Breast epithelium (tissue), 4 donors: ENCODE measurements at regions of chr10 and their contacts with region 1.

Region 1: DNA sequence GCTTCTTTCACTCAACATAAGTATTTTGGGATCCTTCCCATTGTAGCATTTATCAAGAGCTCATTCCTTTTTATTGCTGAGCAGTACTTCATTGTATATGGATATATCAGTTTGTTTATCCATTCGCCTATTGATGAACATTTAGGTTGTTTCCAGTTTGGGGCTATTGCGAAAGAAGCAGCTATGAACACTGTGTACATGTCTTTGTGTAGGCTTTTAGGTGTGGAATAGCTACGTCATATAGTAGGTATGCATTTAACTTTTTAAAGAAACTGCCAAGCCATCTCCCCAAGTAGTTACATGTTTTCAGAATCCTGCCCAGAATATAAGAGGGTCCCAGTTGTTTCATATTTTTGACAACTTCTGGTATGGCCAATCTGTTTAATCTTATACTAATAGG is 468.1 kb downstream of the IPMK start:
- DNase-seq: no peak
- H3K4me3 ChIP-seq: no peak overlapping the region
- H3K27ac ChIP-seq: no peak overlapping the region
- H3K4me1 ChIP-seq: no peaks in the 10 kb centered on the region
- H3K27me3 ChIP-seq: no peaks in the 10 kb centered on the region
- CTCF ChIP-seq: no peak
- POLR2A ChIP-seq: no peak

Region 2: GRCh38 chr10:57460540-57460939 is 339.1 kb before region 1 on chr10:
- intact Hi-C with region 1: loop called (anchors 5 kb)
- DNase-seq: no peak
- H3K4me3 ChIP-seq: no peak overlapping the region
- H3K27ac ChIP-seq: no peak overlapping the region
- H3K4me1 ChIP-seq: no peaks in the 10 kb centered on the region
- H3K27me3 ChIP-seq: no peaks in the 10 kb centered on the region
- CTCF ChIP-seq: no peak
- POLR2A ChIP-seq: no peak

Region 3: DNA sequence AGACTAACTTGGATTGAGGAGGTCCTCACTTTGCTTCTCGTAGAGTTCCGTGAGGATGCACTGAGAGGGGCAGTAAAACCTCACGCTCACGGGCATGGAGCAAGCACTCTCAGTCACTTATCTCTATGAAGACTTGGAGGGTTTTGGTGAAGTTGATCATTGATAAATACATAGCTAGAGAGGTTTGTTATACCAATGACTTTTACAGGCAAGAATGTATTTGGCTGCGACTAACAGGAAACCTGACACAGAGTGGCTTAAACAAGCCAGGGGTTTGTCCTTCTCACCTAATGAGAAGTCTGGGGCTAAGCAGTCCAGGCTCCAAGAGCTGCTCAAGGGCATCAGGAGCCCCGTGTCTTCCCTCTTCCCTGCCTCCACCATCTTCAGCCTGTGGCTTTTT is 719.1 kb after region 1 on chr10:
- intact Hi-C with region 1: no loop called
- DNase-seq: no peak
- H3K4me3 ChIP-seq: peak overlapping the region in 1 of 3 donors; percentile 12
- H3K27ac ChIP-seq: peak overlapping the region in 1 of 2 donors; percentile 15
- H3K4me1 ChIP-seq: no peaks in the 10 kb centered on the region
- H3K27me3 ChIP-seq: peaks cover 0 to 6% of the 10 kb centered on the region in 2 donors
- CTCF ChIP-seq: no peak
- POLR2A ChIP-seq: no peak